KBM-7 (cell line): ENCODE measurements at regions of chr7 and their contacts with region 1.

Region 1: DNA sequence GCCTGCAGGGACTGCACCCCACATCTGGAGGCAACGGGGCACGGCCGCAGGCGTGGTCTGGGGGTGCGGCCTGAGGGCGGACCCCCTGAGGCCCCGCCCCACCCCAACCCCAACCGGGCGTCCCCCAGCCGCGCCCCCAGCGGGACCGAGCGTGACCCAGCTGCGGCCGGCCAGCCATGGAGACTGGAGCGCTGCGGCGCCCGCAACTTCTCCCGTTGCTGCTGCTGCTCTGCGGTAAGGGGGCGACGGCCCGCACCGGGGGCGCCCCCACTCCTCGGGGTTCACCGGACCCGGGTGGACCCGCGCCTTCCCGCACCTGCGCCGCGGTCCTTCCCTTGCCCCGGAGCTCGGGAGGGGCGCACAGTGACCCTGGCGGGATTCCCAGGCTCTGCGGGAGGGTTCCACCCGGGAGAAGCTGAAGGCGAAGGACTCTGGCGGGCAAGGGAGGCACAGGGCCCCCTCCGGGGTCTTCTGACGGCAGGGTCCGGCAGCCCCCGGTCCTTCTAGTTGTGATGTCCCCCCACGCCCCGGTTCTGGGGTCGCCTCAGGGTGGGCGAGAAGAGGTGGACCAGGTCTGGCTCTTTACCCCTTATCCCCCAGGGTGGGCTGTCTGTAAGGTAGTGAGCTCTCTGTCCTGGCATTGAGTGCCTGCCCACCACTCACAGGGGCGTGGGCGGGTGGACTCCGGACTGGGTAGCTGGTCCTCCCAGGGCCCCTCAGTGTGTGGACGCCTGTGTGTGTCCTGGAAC is at the start of gene RAMP3:
- DNase-seq: no peak

Region 2: DNA sequence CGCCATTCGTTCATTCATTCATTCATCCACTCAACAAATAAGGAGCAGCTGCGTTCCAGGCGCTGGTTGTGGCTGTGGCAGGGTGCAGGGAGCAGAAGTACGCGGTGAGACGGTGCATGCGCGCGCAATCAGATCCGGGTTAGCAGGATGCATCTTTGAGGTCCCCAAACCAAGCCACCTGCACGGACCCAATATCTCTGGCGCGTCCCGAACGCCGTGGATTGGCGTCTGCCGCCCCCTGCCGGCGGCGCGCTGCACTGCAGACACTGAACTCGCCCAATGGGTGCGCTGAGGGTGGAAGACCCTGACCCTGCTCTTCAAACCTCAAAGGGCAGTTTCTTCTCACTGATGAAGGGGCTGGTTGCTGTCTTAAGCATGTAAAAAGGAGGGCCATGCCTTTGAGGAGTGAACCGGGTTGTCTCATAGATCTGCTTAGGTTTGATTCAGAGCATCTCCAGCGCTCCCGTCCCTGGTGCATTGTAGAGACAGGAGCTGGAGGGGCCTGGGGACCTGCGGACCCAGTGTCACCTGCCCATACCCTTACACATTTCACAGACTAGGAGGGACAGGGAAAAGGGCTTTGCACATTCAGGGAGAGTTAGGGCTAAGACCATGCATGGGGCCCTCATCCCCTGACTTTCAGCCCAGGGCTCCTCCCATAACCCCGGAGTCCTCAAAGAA is 102.3 kb after region 1 on chr7:
- in situ Hi-C with region 1: loop called (anchors 10 kb)
- DNase-seq: peak; percentile 66